CD4-positive, alpha-beta T cell (primary cell): ENCODE measurements at regions of chr22 and their contacts with region 1.

Region 1: DNA sequence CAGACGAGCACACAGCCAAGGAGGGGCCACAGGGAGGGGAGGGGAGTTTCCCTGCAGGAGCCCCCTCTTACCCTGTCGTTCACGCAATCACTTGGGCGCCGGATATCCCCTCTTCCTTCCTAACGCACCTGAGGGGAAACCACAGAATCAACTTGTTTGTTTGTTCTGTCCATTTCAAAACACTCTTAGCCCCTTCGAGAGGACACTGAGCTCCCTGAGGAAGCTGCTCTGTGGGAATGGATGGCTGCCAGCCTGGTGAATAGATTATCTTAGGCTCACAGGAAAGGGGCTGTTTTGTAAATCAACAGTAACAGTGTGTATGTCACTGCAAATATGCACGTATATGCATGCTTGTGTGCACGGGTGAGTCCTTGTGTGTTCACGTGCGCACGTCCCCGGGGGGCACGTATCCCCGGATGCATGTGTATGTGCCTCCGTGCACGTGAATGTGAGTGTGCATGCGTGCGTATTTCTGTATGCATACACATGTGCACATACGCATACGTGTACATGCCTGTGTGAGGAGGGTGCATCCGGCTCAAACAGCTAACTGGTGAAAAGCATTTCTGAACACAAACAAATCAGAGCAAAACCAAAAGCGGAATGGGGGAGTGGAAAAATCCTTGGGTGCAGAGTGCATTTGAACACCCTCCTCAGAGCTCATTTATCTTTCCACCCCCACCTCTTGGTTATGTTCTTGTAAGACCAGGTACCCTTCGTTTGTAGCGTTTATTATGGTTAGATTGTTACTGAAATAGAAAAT is 7.2 kb downstream of the ARSA start:
- DNase-seq: peak; percentile 39 to 95 (median 64)
- ATAC-seq: peak; percentile 66
- H3K4me3 ChIP-seq: peak overlapping the region; percentile 53
- H3K4me3 Mint-ChIP-seq: peak overlapping the region; percentile 90
- H3K27ac ChIP-seq: peak overlapping the region; percentile 85 to 92
- H3K27ac Mint-ChIP-seq: peak overlapping the region; percentile 98
- H3K4me1 ChIP-seq: peaks cover 36% of the 10 kb centered on the region
- H3K4me1 Mint-ChIP-seq: peaks cover 35% of the 10 kb centered on the region
- H3K27me3 ChIP-seq: no peaks in the 10 kb centered on the region
- H3K27me3 Mint-ChIP-seq: no peaks in the 10 kb centered on the region
- CTCF ChIP-seq: peak; percentile 79

Region 2: GRCh38 chr22:49838771-49839717 is 781.7 kb before region 1 on chr22:
- CTCF ChIA-PET with region 1: no interaction called
- POLR2A ChIA-PET with region 1: no interaction called
- intact Hi-C with region 1: loop called in 1 of 2 experiments (anchors 2 kb)
- DNase-seq: peak; percentile 75 to 98 (median 84)
- ATAC-seq: peak; percentile 92
- H3K4me3 ChIP-seq: peak overlapping the region; percentile 52
- H3K4me3 Mint-ChIP-seq: peak overlapping the region; percentile 72
- H3K27ac ChIP-seq: peak overlapping the region; percentile 92 to 94
- H3K27ac Mint-ChIP-seq: peak overlapping the region; percentile 93
- H3K4me1 ChIP-seq: peaks cover 30% of the 10 kb centered on the region
- H3K4me1 Mint-ChIP-seq: peaks cover 20% of the 10 kb centered on the region
- H3K27me3 ChIP-seq: no peaks in the 10 kb centered on the region
- H3K27me3 Mint-ChIP-seq: no peaks in the 10 kb centered on the region
- CTCF ChIP-seq: no peak

Region 3: DNA sequence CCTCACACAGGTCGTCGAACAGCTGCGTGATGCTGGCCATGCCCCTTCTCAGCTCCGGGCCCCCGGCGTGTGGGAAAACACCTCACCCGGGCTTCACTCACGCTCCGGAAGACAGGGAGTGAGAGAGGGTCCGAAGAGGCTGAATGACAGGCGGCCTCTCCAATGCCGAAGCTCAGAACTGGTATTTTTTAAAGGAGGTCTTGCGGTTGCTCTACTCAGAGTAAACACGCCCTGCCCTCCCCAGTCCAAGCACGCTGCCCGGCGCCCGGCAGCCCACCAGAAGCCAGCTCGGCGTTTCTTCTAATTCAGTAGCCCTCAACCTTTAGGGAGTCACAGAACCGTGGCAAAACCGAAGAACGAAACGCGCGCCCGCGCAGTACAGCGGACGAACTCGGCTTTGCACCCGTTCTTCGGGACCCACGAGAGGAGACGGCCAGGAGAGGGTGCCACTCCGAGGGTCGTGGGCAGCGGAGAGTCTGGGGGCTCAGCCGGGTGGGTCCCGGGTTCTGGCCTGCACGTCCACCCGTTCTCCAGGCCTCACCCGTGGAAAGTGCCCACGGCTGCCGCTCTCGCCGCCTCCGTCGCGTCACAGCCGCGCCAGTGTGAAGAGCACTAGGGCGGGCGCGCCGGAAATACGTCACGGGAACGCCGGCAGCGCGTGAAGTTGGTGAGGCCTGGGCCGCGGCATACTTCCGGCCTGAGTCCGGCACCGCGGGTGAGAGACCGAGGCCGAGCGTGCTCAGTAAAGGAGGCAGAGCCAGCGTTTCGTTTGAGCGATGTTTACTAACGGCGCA is 376.2 kb before region 1 on chr22 and contains the start of gene TUBGCP6:
- CTCF ChIA-PET with region 1: interaction called, 3 read pairs
- POLR2A ChIA-PET with region 1: interaction called, 31 read pairs
- intact Hi-C with region 1: loop called (anchors 2 kb)
- DNase-seq: peak; percentile 76 to 97 (median 90)
- ATAC-seq: peak; percentile 73
- H3K4me3 ChIP-seq: peak within 1 kb of the TSS; percentile 100
- H3K4me3 Mint-ChIP-seq: peak within 1 kb of the TSS; percentile 99
- H3K27ac ChIP-seq: peak within 1 kb of the TSS; percentile 98
- H3K27ac Mint-ChIP-seq: peak within 1 kb of the TSS; percentile 89
- H3K4me1 ChIP-seq: peaks cover 92% of the 10 kb centered on the region
- H3K4me1 Mint-ChIP-seq: peaks cover 47% of the 10 kb centered on the region
- H3K27me3 ChIP-seq: no peaks in the 10 kb centered on the region
- H3K27me3 Mint-ChIP-seq: no peaks in the 10 kb centered on the region
- CTCF ChIP-seq: peak; percentile 33
- total RNA-seq, gene TUBGCP6: 124 to 126 TPM

Region 4: DNA sequence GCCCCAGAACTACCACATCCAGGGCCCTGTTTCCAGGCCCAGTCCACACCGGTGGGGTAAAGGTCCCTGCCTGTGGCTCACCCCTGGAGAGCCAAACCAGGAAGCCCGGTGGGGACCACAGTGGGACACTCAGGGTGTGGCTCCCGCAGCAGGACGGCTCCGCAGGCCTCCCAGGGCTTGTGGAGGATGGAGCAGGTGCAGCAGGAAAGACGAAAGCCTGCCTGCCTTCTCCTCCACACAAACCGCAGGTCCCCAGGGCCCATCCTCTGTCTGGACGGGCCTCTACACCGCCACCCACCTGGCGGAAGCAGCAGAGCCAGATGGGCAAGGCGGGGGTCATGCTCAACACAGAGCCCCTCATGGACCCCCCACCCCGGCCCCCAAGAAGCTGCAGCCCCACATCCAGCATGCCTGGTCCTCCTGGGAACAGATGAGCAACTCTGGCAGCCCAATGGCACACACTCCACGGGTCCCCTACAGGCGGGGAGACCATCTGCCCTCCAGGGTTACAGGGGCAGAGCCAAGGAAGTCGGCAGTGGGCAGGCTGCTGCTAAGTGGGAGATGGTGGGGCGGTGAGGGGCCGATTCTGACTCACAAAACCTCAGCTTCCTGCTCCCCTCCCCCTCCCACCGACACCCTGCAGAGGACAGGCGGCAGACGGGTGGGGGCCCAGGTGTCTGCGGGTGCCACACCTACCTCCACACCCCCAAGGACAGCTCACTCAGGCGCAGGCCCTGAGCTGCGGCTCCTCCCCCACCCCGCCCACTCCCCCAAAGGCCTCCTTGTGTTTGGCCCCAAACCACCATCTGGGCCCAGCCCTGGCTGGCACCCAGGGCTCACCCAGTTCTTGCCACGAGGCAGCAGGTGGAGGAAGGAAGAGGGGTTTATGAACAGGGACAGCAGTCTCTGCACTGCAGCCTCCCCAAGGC is 151.1 kb before region 1 on chr22:
- CTCF ChIA-PET with region 1: interaction called, 8 read pairs
- POLR2A ChIA-PET with region 1: interaction called, 33 read pairs
- intact Hi-C with region 1: no loop called
- DNase-seq: peak; percentile 88 to 99 (median 98)
- ATAC-seq: peak; percentile 86
- H3K4me3 ChIP-seq: peak overlapping the region; percentile 49
- H3K4me3 Mint-ChIP-seq: peak overlapping the region; percentile 89
- H3K27ac ChIP-seq: peak overlapping the region; percentile 82 to 94
- H3K27ac Mint-ChIP-seq: peak overlapping the region; percentile 94
- H3K4me1 ChIP-seq: peaks cover 72% of the 10 kb centered on the region
- H3K4me1 Mint-ChIP-seq: peaks cover 62% of the 10 kb centered on the region
- H3K27me3 ChIP-seq: no peaks in the 10 kb centered on the region
- H3K27me3 Mint-ChIP-seq: no peaks in the 10 kb centered on the region
- CTCF ChIP-seq: peak; percentile 21

Region 5: GRCh38 chr22:50525390-50526068 is 95.2 kb before region 1 on chr22 and contains the start of gene SCO2:
- CTCF ChIA-PET with region 1: interaction called, 35 read pairs
- POLR2A ChIA-PET with region 1: interaction called, 152 read pairs
- intact Hi-C with region 1: loop called (anchors 1 to 5 kb)
- DNase-seq: peak; percentile 95 to 99 (median 98)
- ATAC-seq: peak; percentile 72
- H3K4me3 ChIP-seq: peak within 1 kb of the TSS; percentile 70
- H3K4me3 Mint-ChIP-seq: peak within 1 kb of the TSS; percentile 91
- H3K27ac ChIP-seq: peak within 1 kb of the TSS; percentile 81 to 88
- H3K27ac Mint-ChIP-seq: peak within 1 kb of the TSS; percentile 89
- H3K4me1 ChIP-seq: peaks cover 56% of the 10 kb centered on the region
- H3K4me1 Mint-ChIP-seq: peaks cover 28% of the 10 kb centered on the region
- H3K27me3 ChIP-seq: no peaks in the 10 kb centered on the region
- H3K27me3 Mint-ChIP-seq: no peaks in the 10 kb centered on the region
- CTCF ChIP-seq: no peak
- total RNA-seq, gene SCO2: 0.61 to 5.6 TPM

Region 6: DNA sequence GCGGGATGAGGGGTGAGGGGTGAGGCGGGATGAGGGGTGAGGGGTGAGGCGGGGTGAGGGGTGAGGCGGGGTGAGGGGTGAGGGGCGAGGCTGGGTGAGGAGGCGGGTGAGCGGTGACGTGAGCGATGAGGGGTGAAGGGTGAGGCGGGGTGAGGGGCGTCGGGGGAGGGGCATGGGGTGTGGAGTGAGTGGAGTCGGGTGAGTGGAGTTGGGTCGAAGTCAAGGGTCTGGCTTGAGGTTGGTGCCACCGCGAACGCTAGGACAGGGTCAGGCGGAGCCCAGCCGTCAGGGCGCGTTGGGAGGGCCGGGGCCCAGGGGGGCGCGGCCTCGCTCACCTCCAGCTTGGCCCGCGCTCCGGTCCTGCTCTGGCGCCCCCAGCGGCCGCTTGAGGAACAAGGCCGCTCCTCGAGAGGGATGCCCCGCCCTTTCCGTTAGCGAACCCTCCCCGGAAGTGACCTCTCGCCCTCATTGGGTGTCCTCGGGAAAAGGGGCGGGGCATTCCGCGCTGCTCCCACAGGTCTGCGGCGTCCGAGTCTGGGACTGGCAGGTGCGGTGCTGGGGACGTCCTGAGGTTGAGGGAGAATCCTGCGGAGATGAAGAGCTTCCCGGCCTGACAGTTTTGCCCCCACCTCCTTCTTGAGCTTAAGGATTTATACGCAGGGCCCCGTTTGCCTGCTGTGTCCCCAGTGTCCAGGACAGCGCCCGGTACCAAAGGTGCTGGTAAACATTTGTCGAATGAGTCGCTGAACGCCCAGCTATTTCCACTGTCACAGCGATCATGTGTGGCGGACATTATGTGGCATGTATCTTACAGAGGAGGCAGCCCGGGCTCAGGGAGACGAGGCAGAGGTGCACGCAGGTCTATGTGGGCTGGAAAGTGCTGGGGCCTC is 58.0 kb before region 1 on chr22 and contains the start of gene SYCE3:
- CTCF ChIA-PET with region 1: interaction called, 12 read pairs
- POLR2A ChIA-PET with region 1: interaction called, 14 read pairs
- intact Hi-C with region 1: no loop called
- DNase-seq: peak; percentile 93 to 99 (median 96)
- ATAC-seq: peak; percentile 94
- H3K4me3 ChIP-seq: peak within 1 kb of the TSS; percentile 84
- H3K4me3 Mint-ChIP-seq: peak within 1 kb of the TSS; percentile 96
- H3K27ac ChIP-seq: no peak within 1 kb of the TSS
- H3K27ac Mint-ChIP-seq: peak within 1 kb of the TSS; percentile 85
- H3K4me1 ChIP-seq: peaks cover 10% of the 10 kb centered on the region
- H3K4me1 Mint-ChIP-seq: peaks cover 16% of the 10 kb centered on the region
- H3K27me3 ChIP-seq: no peaks in the 10 kb centered on the region
- H3K27me3 Mint-ChIP-seq: no peaks in the 10 kb centered on the region
- CTCF ChIP-seq: peak; percentile 84
- total RNA-seq, gene SYCE3: not detected

Region 7: DNA sequence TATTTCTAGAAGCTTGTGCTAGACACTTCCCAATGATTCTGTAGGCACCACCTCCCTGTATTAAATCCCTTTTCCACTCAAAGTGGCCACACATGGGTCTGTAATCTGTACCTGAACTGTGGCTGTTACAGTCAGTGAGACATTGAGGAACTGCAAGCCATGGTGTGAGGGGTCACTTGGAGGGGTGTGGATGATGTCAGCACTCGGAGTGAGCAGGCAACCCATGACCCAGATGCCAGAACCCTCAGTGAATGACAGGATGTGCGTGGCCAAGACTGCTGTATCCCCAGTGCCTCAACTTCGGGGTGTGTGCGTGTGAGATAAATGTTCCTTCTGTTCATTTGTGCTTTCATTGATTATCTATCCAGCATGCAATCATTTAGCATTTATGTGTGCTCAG is 37.2 kb after region 1 on chr22:
- CTCF ChIA-PET with region 1: no interaction called
- POLR2A ChIA-PET with region 1: no interaction called
- intact Hi-C with region 1: no loop called
- DNase-seq: no peak
- ATAC-seq: no peak
- H3K4me3 ChIP-seq: no peak overlapping the region
- H3K4me3 Mint-ChIP-seq: no peak overlapping the region
- H3K27ac ChIP-seq: no peak overlapping the region
- H3K27ac Mint-ChIP-seq: no peak overlapping the region
- H3K4me1 ChIP-seq: no peaks in the 10 kb centered on the region
- H3K4me1 Mint-ChIP-seq: no peaks in the 10 kb centered on the region
- H3K27me3 ChIP-seq: peaks cover 5 to 7% of the 10 kb centered on the region in 2 experiments
- H3K27me3 Mint-ChIP-seq: peaks cover 29% of the 10 kb centered on the region
- CTCF ChIP-seq: no peak

Region 8: GRCh38 chr22:50691521-50691920 is 70.7 kb after region 1 on chr22:
- CTCF ChIA-PET with region 1: no interaction called
- POLR2A ChIA-PET with region 1: interaction called, 3 read pairs
- intact Hi-C with region 1: loop called (anchors 1 to 5 kb)
- DNase-seq: peak in 7 of 14 experiments; percentile 14 to 64 (median 43)
- ATAC-seq: no peak
- H3K4me3 ChIP-seq: no peak overlapping the region
- H3K4me3 Mint-ChIP-seq: no peak overlapping the region
- H3K27ac ChIP-seq: no peak overlapping the region
- H3K27ac Mint-ChIP-seq: no peak overlapping the region
- H3K4me1 ChIP-seq: no peaks in the 10 kb centered on the region
- H3K4me1 Mint-ChIP-seq: no peaks in the 10 kb centered on the region
- H3K27me3 ChIP-seq: peaks cover 0 to 7% of the 10 kb centered on the region in 2 experiments
- H3K27me3 Mint-ChIP-seq: peaks cover 7% of the 10 kb centered on the region
- CTCF ChIP-seq: peak; percentile 42